ENCODE measurements at regions of chr7 and their contacts with region 1.

Region 1: DNA sequence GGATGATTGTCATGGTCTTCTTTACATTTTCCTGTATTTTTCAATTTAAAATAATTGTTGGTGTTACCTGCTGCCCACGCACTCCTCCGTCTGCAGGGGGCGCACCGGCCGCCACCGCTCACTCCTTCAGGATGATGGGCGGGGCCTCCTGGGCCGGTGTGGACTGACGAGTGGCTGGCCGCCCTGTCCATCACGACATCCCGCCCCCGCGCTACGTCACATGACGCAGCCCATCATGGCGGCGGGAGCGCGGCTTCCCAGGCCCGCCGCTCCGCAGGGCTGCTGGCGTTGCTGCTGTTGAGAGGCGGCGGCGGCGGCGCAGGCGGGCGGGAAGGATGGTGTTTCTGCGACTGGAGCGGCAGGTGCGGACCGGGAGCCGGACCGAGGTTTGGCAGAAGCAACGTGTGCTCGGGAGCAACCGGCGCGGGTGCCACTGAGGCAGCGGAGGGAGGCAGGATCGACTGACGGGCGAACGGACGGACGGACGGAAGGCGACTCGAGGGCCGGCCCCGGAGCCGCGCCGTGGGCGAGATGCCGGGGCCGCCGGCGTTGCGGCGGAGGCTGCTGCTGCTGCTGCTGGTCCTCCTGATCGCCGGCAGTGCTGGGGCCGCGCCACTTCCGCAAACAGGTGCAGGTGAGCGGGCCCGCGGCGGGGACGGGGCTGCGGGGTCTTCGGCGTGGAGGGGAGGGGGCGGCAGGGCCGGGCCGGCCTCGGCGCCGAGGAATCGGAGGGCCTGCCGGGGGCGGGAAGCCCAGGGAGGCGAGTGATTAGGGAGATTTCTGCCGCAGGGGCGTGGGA is at the start of gene LMTK2:
- DNase-seq: peak; percentile 90
- ATAC-seq: peak; percentile 98
- H3K4me3 ChIP-seq: peak within 1 kb of the TSS; percentile 80
- H3K27ac ChIP-seq: peak within 1 kb of the TSS; percentile 82
- H3K4me1 ChIP-seq: peaks cover 12% of the 10 kb centered on the region
- H3K27me3 ChIP-seq: no peaks in the 10 kb centered on the region
- CTCF ChIP-seq: peak; percentile 85
- total RNA-seq, gene LMTK2: 9.0 and 16.0 TPM in 2 replicates

Region 2: DNA sequence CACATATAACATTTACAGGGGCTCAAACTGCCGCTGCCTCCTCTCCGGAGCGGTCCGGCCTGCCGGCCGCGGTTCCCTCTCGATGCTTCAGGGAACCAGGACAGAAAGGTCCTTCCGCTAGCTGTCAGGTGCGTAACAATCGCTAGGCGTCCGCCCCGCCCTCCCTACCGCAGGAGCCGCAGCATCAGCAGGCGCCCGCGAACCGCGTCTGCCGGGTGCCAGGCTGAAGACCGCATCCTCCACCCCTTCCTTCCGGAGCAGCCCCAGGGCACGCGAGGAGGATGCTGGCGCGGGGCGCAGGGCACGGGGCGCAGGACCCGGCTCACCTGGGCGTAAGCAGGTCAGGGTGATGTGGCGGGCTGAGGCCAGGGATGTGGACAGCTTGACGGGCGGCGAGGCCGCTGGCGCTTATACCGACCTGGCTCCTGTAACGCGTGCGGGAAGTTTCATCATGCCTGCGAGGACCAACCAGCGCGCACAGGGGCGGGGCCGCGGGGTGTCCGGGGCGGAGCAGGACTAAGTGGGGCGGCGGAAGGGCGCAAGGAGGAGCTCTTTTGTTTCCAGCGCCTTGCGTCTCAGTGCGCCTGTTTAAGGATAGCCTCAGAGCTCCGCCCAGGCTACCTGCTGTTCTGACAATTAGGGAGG is 234.7 kb before region 1 on chr7 and contains the start of gene ASNS:
- CTCF ChIA-PET with region 1: no interaction called
- POLR2A ChIA-PET with region 1: no interaction called
- intact Hi-C with region 1: loop called (anchors 5 kb)
- DNase-seq: peak; percentile 91
- ATAC-seq: peak; percentile 97
- H3K4me3 ChIP-seq: peak within 1 kb of the TSS; percentile 80
- H3K27ac ChIP-seq: no peak within 1 kb of the TSS
- H3K4me1 ChIP-seq: peaks cover 10% of the 10 kb centered on the region
- H3K27me3 ChIP-seq: no peaks in the 10 kb centered on the region
- CTCF ChIP-seq: no peak
- total RNA-seq, gene ASNS: 14.9 and 19.5 TPM in 2 replicates

Region 3: GRCh38 chr7:98021588-98022351 is 85.1 kb before region 1 on chr7:
- CTCF ChIA-PET with region 1: interaction called, 3 read pairs
- POLR2A ChIA-PET with region 1: no interaction called
- intact Hi-C with region 1: loop called (anchors 1 kb)
- DNase-seq: peak; percentile 77
- ATAC-seq: peak; percentile 96
- H3K4me3 ChIP-seq: no peak overlapping the region
- H3K27ac ChIP-seq: no peak overlapping the region
- H3K4me1 ChIP-seq: no peaks in the 10 kb centered on the region
- H3K27me3 ChIP-seq: no peaks in the 10 kb centered on the region
- CTCF ChIP-seq: peak; percentile 82

Region 4: GRCh38 chr7:98133181-98133580 is 26.3 kb after region 1 on chr7:
- CTCF ChIA-PET with region 1: interaction called, 8 read pairs
- POLR2A ChIA-PET with region 1: interaction called, 17 read pairs
- intact Hi-C with region 1: loop called (anchors 1 kb)
- DNase-seq: peak; percentile 73
- ATAC-seq: peak; percentile 58
- H3K4me3 ChIP-seq: peak overlapping the region; percentile 16; the same call in 1 of the 2 replicates
- H3K27ac ChIP-seq: peak overlapping the region; percentile 64
- H3K4me1 ChIP-seq: peaks cover 57% of the 10 kb centered on the region
- H3K27me3 ChIP-seq: no peaks in the 10 kb centered on the region
- CTCF ChIP-seq: no peak